Activated CD8-positive, alpha-beta T cell treated with anti-CD3 and anti-CD28 coated beads for 36 hours (primary cell): ENCODE measurements at regions of chr2 and their contacts with region 1.

Region 1: GRCh38 chr2:38590053-38590452 is 12.7 kb downstream of the HNRNPLL start:
- DNase-seq: no peak
- ATAC-seq: no peak
- H3K4me3 Mint-ChIP-seq: no peak overlapping the region
- H3K27ac Mint-ChIP-seq: peak overlapping the region; percentile 10
- H3K4me1 Mint-ChIP-seq: peaks cover 41% of the 10 kb centered on the region
- H3K27me3 Mint-ChIP-seq: no peaks in the 10 kb centered on the region
- CTCF ChIP-seq: peak; percentile 50

Region 2: DNA sequence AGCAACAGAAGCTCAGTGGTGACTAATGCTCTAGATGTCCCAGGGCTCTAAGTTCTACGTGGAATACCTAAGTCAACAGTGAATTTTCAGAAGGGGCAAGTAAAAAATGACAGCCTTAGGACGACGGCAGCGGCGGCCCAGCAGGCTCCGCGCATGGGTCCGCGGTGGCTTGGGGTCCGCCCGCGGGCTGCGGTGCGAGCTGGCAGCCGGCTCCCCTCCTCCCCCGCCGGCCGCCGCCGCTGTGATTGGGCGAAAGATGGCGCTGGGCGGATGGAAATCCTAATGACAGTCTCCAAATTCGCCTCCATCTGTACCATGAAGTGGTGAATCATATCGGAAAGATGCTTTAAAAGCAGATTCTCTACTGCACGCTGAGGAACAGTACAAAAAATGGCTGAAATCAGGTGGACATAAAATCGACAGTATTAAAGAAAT is 62.0 kb before region 1 on chr2:
- CTCF ChIA-PET with region 1: no interaction called
- POLR2A ChIA-PET with region 1: no interaction called
- intact Hi-C with region 1: no loop called
- DNase-seq: peak; percentile 77
- ATAC-seq: peak; percentile 85
- H3K4me3 Mint-ChIP-seq: peak overlapping the region; percentile 52
- H3K27ac Mint-ChIP-seq: no peak overlapping the region
- H3K4me1 Mint-ChIP-seq: peaks cover 4% of the 10 kb centered on the region
- H3K27me3 Mint-ChIP-seq: peaks cover 20% of the 10 kb centered on the region
- CTCF ChIP-seq: no peak

Region 3: GRCh38 chr2:38740851-38741731 is 151.0 kb after region 1 on chr2:
- CTCF ChIA-PET with region 1: interaction called, 95 read pairs
- POLR2A ChIA-PET with region 1: interaction called, 209 read pairs
- intact Hi-C with region 1: no loop called
- DNase-seq: no peak
- ATAC-seq: no peak
- H3K4me3 Mint-ChIP-seq: no peak overlapping the region
- H3K27ac Mint-ChIP-seq: peak overlapping the region; percentile 28
- H3K4me1 Mint-ChIP-seq: peaks cover 46% of the 10 kb centered on the region
- H3K27me3 Mint-ChIP-seq: no peaks in the 10 kb centered on the region
- CTCF ChIP-seq: peak; percentile 87